CD8-positive, alpha-beta memory T cell (primary cell): ENCODE measurements at regions of chr22 and their contacts with region 1.

Region 1: DNA sequence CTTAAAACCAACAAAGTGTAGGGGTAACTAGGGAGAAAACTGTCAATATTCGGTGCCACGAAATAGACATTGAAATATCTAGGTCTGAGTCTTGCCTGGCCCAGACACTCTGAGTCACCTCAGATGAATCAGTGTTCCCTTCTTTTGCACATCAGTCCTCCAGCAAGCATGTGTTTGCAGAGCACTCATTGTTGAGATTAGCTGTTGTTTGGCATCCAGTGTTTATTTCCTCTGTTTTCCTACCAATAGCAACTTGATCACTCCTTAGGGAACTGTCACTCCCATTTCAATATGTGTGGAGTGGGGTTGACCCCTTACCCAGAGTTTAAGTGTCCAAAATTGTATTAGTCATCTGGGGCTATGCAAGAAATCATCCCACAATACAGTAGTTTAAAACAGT is 4.7 kb upstream of the ASCC2 start:
- DNase-seq: no peak
- H3K4me3 ChIP-seq: no peak overlapping the region
- H3K4me3 Mint-ChIP-seq: no peak overlapping the region
- H3K27ac ChIP-seq: no peak overlapping the region
- H3K27ac Mint-ChIP-seq: no peak overlapping the region
- H3K4me1 ChIP-seq: peaks cover 7% of the 10 kb centered on the region
- H3K4me1 Mint-ChIP-seq: peaks cover 11 to 13% (median 11%) of the 10 kb centered on the region in 3 donors
- H3K27me3 ChIP-seq: no peaks in the 10 kb centered on the region
- H3K27me3 Mint-ChIP-seq: no peaks in the 10 kb centered on the region

Region 2: DNA sequence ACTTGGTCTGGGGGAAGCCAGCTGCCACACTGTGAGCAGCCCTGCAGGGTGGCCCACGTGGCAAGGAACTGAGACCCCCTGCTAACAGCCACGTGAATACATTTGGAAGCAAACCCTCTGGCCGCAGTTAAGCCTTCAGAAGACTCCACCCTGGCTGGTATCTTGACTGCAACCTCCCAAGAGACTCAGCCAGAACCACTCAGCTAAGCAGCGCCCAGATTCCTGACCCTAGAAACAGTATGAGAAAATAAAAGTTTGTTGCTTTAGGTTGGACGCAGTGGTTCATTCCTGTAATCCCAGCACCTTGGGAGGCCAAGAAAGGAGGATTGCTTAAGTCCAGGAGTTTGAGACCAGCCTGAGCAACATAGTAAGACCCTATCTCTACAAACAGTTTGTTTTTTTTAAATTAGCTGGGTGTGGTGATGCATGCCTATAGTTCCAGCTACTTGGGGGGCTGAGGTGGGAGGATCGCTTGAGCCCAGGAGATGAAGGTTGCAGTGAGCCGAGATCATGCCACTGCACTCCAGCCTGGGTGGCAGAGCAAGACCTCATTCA is 84.6 kb before region 1 on chr22:
- CTCF ChIA-PET with region 1: no interaction called
- POLR2A ChIA-PET with region 1: no interaction called
- DNase-seq: no peak
- H3K4me3 ChIP-seq: no peak overlapping the region
- H3K4me3 Mint-ChIP-seq: no peak overlapping the region
- H3K27ac ChIP-seq: no peak overlapping the region
- H3K27ac Mint-ChIP-seq: no peak overlapping the region
- H3K4me1 ChIP-seq: no peaks in the 10 kb centered on the region
- H3K4me1 Mint-ChIP-seq: peaks cover 0 to 3% (median 2%) of the 10 kb centered on the region in 3 donors
- H3K27me3 ChIP-seq: no peaks in the 10 kb centered on the region
- H3K27me3 Mint-ChIP-seq: no peaks in the 10 kb centered on the region

Region 3: GRCh38 chr22:30927806-30928205 is 1085.1 kb after region 1 on chr22:
- CTCF ChIA-PET with region 1: no interaction called
- POLR2A ChIA-PET with region 1: interaction called, 12 read pairs
- DNase-seq: no peak
- H3K4me3 ChIP-seq: no peak overlapping the region
- H3K4me3 Mint-ChIP-seq: no peak overlapping the region
- H3K27ac ChIP-seq: no peak overlapping the region
- H3K27ac Mint-ChIP-seq: no peak overlapping the region
- H3K4me1 ChIP-seq: peaks cover 24% of the 10 kb centered on the region
- H3K4me1 Mint-ChIP-seq: peaks cover 9 to 19% (median 14%) of the 10 kb centered on the region in 3 donors
- H3K27me3 ChIP-seq: no peaks in the 10 kb centered on the region
- H3K27me3 Mint-ChIP-seq: peaks cover 0 to 1% of the 10 kb centered on the region in 2 donors